ENCODE measurements at regions of chr4 and their contacts with region 1.

Region 1: DNA sequence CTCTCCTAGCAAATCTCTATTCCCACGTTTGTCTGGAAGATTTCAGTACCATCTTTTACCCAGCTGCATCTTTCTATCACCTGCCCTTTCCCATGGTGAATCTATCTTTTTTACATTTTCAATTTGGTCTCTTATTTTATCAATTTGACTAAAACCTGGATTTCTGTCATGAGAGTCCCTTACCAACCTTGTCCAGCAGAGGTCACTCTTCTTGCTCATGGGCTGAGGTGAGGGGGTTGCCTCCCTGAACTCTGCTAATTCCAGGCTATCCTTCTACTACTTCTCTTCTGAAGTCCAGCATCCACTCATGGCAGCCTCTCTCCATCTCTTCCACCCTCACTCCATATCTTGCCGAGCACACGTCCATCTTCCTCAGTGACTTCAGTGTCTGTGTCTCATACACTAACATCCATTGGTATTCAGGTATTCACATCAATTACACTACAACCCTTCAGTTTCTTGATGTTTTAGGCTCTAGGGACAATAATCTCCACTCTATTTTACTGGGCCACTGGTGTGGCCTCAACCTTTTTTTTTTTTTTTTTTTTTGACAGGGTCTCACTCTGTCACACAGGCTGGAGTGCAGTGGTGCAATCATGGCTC is 17.8 kb upstream of the ZNF827 start:
- DNase-seq: peak; percentile 55 to 70 (median 62)
- H3K4me3 ChIP-seq: no peak overlapping the region
- H3K27ac ChIP-seq: no peak overlapping the region
- H3K4me1 ChIP-seq: no peaks in the 10 kb centered on the region
- H3K27me3 ChIP-seq: no peaks in the 10 kb centered on the region

Region 2: GRCh38 chr4:145945431-145946155 is 10.8 kb before region 1 on chr4:
- CTCF ChIA-PET with region 1: interaction called, 10 read pairs
- POLR2A ChIA-PET with region 1: no interaction called
- DNase-seq: no peak
- H3K4me3 ChIP-seq: no peak overlapping the region
- H3K27ac ChIP-seq: no peak overlapping the region
- H3K4me1 ChIP-seq: no peaks in the 10 kb centered on the region
- H3K27me3 ChIP-seq: no peaks in the 10 kb centered on the region

Measured in common myeloid progenitor, CD34-positive (primary cell).